ENCODE measurements at regions of chr1 and their contacts with region 1.

Region 1: GRCh38 chr1:231603598-231604275 is 22.9 kb upstream of the DISC1 start:
- DNase-seq: no peak
- ATAC-seq: peak; percentile 77
- H3K4me3 Mint-ChIP-seq: peak overlapping the region; percentile 89
- H3K27ac Mint-ChIP-seq: peak overlapping the region; percentile 69
- H3K4me1 Mint-ChIP-seq: peaks cover 16% of the 10 kb centered on the region
- H3K27me3 Mint-ChIP-seq: peaks cover 4% of the 10 kb centered on the region
- CTCF ChIP-seq: no peak

Region 2: GRCh38 chr1:231315887-231316286 is 287.9 kb before region 1 on chr1:
- CTCF ChIA-PET with region 1: no interaction called
- POLR2A ChIA-PET with region 1: interaction called, 8 read pairs
- intact Hi-C with region 1: loop called (anchors 1 kb)
- DNase-seq: no peak
- ATAC-seq: peak; percentile 50
- H3K4me3 Mint-ChIP-seq: no peak overlapping the region
- H3K27ac Mint-ChIP-seq: no peak overlapping the region
- H3K4me1 Mint-ChIP-seq: no peaks in the 10 kb centered on the region
- H3K27me3 Mint-ChIP-seq: no peaks in the 10 kb centered on the region
- CTCF ChIP-seq: no peak

Region 3: GRCh38 chr1:231695439-231696255 is 91.9 kb after region 1 on chr1:
- CTCF ChIA-PET with region 1: no interaction called
- POLR2A ChIA-PET with region 1: no interaction called
- intact Hi-C with region 1: no loop called
- DNase-seq: no peak
- ATAC-seq: no peak
- H3K4me3 Mint-ChIP-seq: no peak overlapping the region
- H3K27ac Mint-ChIP-seq: no peak overlapping the region
- H3K4me1 Mint-ChIP-seq: peaks cover 10% of the 10 kb centered on the region
- H3K27me3 Mint-ChIP-seq: peaks cover 37% of the 10 kb centered on the region
- CTCF ChIP-seq: no peak

Measured in activated B cell treated with CpG ODN at 0.5 μM for 24 hours (primary cell).